ENCODE measurements at regions of chr18 and their contacts with region 1.

Region 1: DNA sequence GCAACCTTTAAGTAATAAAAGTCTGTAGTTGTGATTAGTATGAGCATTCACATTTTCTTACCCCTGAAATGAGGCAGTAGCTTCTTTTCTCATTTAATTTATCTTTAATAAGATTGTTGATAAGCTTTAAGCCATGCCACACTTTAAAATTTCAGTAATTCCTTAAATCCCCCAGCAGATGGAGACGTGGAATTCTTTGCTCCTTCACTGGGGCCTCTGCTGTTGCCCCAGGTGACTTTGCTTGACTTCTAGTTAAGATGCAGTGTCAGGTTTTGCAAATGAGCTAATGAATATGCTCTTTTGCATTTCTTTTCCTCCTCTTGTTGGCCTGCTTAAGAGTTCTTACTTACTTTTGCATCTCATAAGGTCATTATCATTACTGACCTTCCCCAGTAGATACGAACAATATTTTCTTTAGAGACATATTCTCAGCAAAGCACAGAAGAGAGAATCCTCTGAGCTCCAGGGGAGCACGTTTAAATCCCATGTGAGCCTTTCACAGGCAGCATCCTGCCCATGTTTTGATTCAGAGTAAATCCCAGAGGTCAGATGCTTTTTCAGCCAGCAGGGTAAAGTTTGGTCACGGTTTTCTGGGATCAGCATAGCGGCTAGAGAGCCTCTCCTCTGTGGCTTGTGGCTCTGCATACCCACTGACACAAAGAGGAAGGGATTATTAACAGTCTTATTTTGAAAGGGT is 222.9 kb downstream of the PTPRM start:
- DNase-seq: no peak
- ATAC-seq: peak in 1 of 2 donors; percentile 66
- H3K4me3 ChIP-seq: no peak overlapping the region
- H3K27ac ChIP-seq: peak overlapping the region in 2 of 4 donors; percentile 26 to 45
- H3K4me1 ChIP-seq: peaks cover 6 to 12% of the 10 kb centered on the region in 2 donors
- H3K27me3 ChIP-seq: no peaks in the 10 kb centered on the region
- CTCF ChIP-seq: peak in 4 of 5 experiments; percentile 22 to 54 (median 44)
- POLR2A ChIP-seq: no peak

Region 2: DNA sequence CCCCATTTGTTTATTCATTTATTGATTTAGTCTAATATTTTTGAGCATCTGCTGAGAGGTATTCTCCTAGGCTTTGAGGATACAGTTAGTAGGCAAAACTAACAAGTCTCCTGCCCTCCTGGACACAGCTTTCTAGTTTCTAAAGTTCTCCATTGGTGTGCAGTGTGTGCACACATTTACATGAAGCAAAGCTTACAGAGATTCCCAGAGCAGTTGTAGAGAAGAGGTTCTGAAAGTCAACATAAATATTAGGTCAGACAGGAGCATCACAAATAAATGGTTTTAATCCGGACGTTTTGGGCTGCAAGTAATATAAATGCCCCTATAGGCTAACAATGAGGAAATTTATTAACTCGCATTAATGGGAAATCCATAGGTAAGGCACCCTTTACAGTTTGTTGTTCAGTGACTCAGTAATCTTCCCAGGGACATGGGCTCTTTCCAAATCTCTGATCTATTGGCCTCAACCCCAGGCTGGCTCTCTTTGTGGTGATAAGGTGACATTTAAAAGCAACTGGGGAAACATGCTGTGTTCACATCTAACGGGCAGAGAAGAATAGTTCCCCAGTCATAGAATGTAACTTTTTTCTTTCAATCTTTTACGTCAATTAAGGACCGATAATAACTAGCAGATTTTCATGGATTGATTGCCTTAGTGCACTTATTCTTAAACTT is 184.3 kb after region 1 on chr18:
- in situ Hi-C with region 1: no loop called
- intact Hi-C with region 1: loop called (anchors 10 kb)
- DNase-seq: peak; percentile 10 to 38
- ATAC-seq: peak; percentile 84 to 93
- H3K4me3 ChIP-seq: no peak overlapping the region
- H3K27ac ChIP-seq: peak overlapping the region; percentile 38 to 69 (median 42)
- H3K4me1 ChIP-seq: peaks cover 0 to 13% of the 10 kb centered on the region in 2 donors
- H3K27me3 ChIP-seq: no peaks in the 10 kb centered on the region
- CTCF ChIP-seq: no peak
- POLR2A ChIP-seq: no peak

Measured in gastrocnemius medialis (tissue), 4 donors.